ENCODE measurements at regions of chr4 and their contacts with region 1.

Region 1: DNA sequence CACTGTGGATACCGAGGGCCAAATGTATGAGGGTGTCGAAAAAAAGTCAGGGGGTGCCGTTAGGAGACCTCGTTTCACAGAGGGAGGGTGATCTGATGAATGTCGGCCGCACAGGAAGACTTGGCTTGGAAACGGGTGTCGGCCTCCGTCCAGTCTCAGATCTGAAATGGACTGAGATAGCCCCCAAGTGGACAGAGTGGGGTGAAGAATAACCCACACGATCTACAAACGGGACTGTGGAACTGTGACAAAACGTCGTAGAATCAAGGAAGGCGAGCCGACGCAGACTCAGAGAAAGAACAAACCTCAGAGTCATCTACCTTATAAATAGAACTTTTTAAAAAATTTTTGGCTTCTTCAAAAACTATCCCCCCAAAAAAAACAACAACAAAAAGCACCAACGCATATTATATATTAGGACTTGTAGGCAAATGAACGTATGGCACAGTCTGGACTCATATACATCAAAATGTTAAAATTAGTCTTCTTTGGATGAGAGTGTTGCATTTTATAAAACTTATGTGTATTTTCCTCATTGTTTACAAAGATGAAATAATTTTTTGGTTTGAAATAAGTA is 63.8 kb upstream of the IRF2 start:
- DNase-seq: peak; percentile 79
- H3K4me3 Mint-ChIP-seq: peak overlapping the region; percentile 97
- H3K27ac Mint-ChIP-seq: peak overlapping the region; percentile 96
- H3K4me1 Mint-ChIP-seq: peaks cover 35% of the 10 kb centered on the region
- H3K27me3 Mint-ChIP-seq: no peaks in the 10 kb centered on the region

Region 2: DNA sequence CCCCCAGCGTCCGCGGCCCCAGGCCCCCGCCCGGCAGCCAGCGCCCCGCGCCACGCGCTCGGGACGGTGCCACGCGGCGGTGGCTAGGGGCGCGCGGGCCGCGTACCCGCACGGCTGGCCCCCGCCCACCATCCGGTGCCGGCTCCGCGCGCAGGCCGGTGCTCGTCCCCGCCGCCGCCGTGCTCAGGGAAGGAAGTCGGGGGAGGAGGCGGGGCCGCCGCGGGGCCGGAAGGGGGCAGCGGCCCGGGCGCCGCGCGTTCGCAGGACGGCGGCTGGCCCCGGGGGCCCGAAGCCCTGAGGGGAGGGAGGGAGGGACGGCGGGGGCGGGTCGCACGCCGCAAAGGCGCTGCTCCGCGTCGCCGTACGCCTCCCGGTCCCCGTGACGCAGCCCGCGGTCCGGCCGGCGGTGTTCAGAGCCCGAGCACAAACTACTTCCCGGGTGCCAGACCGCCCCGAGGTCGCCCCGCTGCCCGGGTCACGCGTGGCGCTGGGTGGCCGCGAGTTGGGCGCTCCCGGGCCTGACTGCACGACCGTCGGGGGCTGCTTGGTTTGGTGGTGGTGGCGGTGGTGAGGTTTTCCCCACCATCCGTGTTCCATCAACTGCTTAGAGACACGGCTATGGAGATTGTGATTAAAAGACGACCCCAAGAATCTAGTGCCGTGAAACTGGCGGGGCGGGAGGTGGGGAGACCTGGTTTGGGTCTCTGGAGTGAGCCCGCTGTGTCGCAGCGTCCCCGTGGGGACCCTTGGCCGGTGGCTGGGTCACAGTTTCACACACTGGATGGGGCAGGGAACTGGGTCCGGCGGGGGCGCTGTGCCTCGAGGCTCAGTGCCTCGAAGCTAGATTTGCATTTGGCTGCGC is 1620.7 kb before region 1 on chr4 and contains the start of gene DCTD:
- CTCF ChIA-PET with region 1: no interaction called
- intact Hi-C with region 1: loop called (anchors 5 kb)
- DNase-seq: peak; percentile 83
- H3K4me3 Mint-ChIP-seq: peak within 1 kb of the TSS; percentile 86
- H3K27ac Mint-ChIP-seq: peak within 1 kb of the TSS; percentile 92
- H3K4me1 Mint-ChIP-seq: peaks cover 53% of the 10 kb centered on the region
- H3K27me3 Mint-ChIP-seq: no peaks in the 10 kb centered on the region
- total RNA-seq, gene DCTD: 137 to 152 TPM

Region 3: DNA sequence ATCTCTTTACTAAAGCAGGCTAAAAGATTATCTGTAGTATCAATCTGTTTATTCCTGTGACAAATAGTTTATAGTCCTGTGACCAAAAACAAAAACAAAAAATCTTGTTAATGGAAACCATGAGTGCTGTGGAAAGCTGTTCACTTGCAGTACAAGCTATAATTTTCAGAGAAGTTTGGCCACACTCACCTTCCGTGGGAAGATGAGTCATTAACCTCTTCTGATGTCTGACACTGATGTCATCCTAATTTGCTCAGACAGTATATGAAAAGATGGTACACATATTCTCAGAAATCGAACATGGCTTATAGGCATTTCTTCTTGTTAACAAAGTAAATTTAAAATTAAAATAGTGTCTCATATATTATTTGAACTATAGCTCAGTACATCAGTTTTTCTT is 300.5 kb before region 1 on chr4:
- CTCF ChIA-PET with region 1: no interaction called
- intact Hi-C with region 1: loop called (anchors 1 kb)
- DNase-seq: peak; percentile 84
- H3K4me3 Mint-ChIP-seq: peak overlapping the region; percentile 32
- H3K27ac Mint-ChIP-seq: peak overlapping the region; percentile 93
- H3K4me1 Mint-ChIP-seq: peaks cover 40% of the 10 kb centered on the region
- H3K27me3 Mint-ChIP-seq: no peaks in the 10 kb centered on the region

Region 4: GRCh38 chr4:184310171-184310567 is 227.9 kb before region 1 on chr4:
- CTCF ChIA-PET with region 1: interaction called, 3 read pairs
- intact Hi-C with region 1: loop called (anchors 1 kb)
- DNase-seq: peak; percentile 69
- H3K4me3 Mint-ChIP-seq: no peak overlapping the region
- H3K27ac Mint-ChIP-seq: no peak overlapping the region
- H3K4me1 Mint-ChIP-seq: peaks cover 32% of the 10 kb centered on the region
- H3K27me3 Mint-ChIP-seq: peaks cover 3% of the 10 kb centered on the region

Region 5: GRCh38 chr4:184408021-184408710 is 129.9 kb before region 1 on chr4:
- CTCF ChIA-PET with region 1: no interaction called
- intact Hi-C with region 1: loop called (anchors 2 kb)
- DNase-seq: no peak
- H3K4me3 Mint-ChIP-seq: no peak overlapping the region
- H3K27ac Mint-ChIP-seq: no peak overlapping the region
- H3K4me1 Mint-ChIP-seq: peaks cover 46% of the 10 kb centered on the region
- H3K27me3 Mint-ChIP-seq: no peaks in the 10 kb centered on the region

Region 6: GRCh38 chr4:184575306-184575705 is 37.2 kb after region 1 on chr4:
- CTCF ChIA-PET with region 1: interaction called, 3 read pairs
- intact Hi-C with region 1: loop called (anchors 2 kb)
- DNase-seq: no peak
- H3K4me3 Mint-ChIP-seq: no peak overlapping the region
- H3K27ac Mint-ChIP-seq: no peak overlapping the region
- H3K4me1 Mint-ChIP-seq: peaks cover 13% of the 10 kb centered on the region
- H3K27me3 Mint-ChIP-seq: no peaks in the 10 kb centered on the region

Region 7: DNA sequence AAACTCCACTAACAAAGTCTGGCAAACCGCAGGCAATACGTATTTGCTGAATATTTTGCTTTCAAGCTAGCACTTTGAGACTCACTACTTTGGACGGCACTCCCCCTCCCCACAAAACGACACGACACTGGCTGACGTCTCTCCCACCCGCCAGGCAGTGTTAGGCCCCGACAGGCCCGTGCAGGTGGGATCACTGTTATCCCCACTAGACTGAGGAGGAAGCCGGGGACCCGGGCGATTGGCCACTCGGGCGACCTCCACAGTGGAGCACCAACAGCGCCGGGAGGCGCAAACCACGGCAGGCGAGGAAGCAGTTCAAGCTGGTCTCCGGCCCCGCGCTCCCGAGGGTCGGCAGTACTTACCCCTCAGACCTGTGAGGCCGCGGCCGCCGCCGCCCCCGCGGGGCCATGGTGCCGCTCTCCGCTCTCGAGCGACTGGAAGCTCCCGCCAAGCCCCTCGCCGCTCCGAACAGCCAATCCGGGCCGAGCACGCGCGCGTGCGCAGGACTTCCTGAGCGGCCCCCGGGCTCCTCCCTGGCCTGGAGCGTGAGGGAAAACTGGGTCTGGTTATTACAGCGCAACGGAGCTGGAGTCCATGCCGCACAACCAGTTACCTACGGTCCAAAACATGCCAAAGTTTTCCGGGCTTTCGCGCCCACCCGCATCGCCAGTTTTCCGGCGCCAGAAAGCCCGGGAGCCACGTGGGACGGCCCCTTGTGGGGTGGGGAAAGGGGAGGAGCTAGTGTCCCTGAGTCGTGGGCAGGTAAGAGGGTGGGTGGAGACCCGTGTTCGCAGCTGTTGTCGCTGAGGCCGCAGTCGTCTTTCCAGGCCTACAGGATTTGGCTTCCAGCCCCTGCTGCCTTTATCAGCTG is 195.8 kb after region 1 on chr4 and contains the start of gene CENPU:
- CTCF ChIA-PET with region 1: no interaction called
- intact Hi-C with region 1: loop called (anchors 1 kb)
- DNase-seq: peak; percentile 97
- H3K4me3 Mint-ChIP-seq: peak within 1 kb of the TSS; percentile 97
- H3K27ac Mint-ChIP-seq: peak within 1 kb of the TSS; percentile 86
- H3K4me1 Mint-ChIP-seq: peaks cover 19% of the 10 kb centered on the region
- H3K27me3 Mint-ChIP-seq: no peaks in the 10 kb centered on the region
- total RNA-seq, gene CENPU: 78.7 to 91.5 TPM

Measured in activated naive CD4-positive, alpha-beta T cell treated with anti-CD3 and anti-CD28 coated beads for 36 hours (primary cell).